Calu3 (cell line): ENCODE measurements at regions of chr17 and their contacts with region 1.

Region 1: GRCh38 chr17:39730095-39730921 is at the start of gene MIEN1:
- DNase-seq: no peak
- H3K4me3 Mint-ChIP-seq: peak within 1 kb of the TSS; percentile 79
- H3K27ac Mint-ChIP-seq: peak within 1 kb of the TSS; percentile 90
- H3K4me1 Mint-ChIP-seq: peaks cover 34% of the 10 kb centered on the region
- H3K27me3 Mint-ChIP-seq: no peaks in the 10 kb centered on the region
- CTCF ChIP-seq: no peak
- total RNA-seq, gene MIEN1: 2,121 and 2,217 TPM in 2 replicates

Region 2: GRCh38 chr17:39547713-39548478 is 182.4 kb before region 1 on chr17:
- CTCF ChIA-PET with region 1: interaction called, 14 read pairs
- intact Hi-C with region 1: no loop called
- DNase-seq: peak; percentile 96
- H3K4me3 Mint-ChIP-seq: no peak overlapping the region
- H3K27ac Mint-ChIP-seq: no peak overlapping the region
- H3K4me1 Mint-ChIP-seq: peaks cover 12% of the 10 kb centered on the region
- H3K27me3 Mint-ChIP-seq: no peaks in the 10 kb centered on the region
- CTCF ChIP-seq: peak; percentile 100

Region 3: DNA sequence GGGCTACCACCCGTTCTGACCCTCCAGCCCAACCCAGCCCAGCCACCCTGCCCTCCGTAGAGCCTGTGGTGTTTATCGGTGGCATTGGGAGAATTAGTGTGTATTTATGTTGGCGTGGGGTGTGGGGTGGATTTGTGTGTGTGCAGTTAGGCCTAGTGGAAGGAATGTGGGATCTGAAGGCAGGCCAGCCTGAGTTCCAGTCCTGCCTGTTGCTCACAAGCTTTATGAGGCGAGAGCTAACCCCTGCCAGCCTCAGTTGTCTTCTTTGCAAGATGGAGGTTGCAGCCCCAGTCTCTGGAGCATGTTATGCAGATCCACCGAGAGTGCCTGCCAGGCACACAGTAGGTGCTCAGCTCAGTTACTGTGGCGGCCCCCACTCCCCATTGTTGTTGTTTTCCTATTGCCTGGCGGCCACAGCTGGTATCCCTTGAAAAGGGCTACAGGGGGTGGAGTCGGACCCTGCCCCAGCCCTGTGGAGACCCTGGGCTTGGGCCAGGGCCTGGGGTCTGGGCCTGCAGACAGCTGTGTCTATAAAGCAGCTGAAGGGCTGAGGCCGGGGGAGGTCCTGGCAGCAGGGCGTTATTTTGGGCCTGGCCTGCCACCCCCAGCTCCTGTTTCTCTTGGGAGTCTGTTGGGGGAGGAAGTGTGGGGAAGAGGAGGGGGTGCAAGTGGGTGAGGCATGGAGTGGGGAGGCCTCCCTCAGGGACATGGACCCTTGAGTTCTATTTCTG is 25.3 kb before region 1 on chr17:
- CTCF ChIA-PET with region 1: interaction called, 34,714 read pairs
- intact Hi-C with region 1: loop called (anchors 1 kb)
- DNase-seq: peak; percentile 99
- H3K4me3 Mint-ChIP-seq: peak overlapping the region; percentile 71
- H3K27ac Mint-ChIP-seq: peak overlapping the region; percentile 67
- H3K4me1 Mint-ChIP-seq: peaks cover 92% of the 10 kb centered on the region
- H3K27me3 Mint-ChIP-seq: no peaks in the 10 kb centered on the region
- CTCF ChIP-seq: no peak

Region 4: GRCh38 chr17:39828443-39828842 is 98.1 kb after region 1 on chr17:
- CTCF ChIA-PET with region 1: interaction called, 1,211 read pairs
- intact Hi-C with region 1: loop called (anchors 1 kb)
- DNase-seq: peak; percentile 100
- H3K4me3 Mint-ChIP-seq: peak overlapping the region; percentile 36
- H3K27ac Mint-ChIP-seq: peak overlapping the region; percentile 48
- H3K4me1 Mint-ChIP-seq: peaks cover 17% of the 10 kb centered on the region
- H3K27me3 Mint-ChIP-seq: no peaks in the 10 kb centered on the region
- CTCF ChIP-seq: no peak

Region 5: GRCh38 chr17:39903158-39903884 is 173.0 kb after region 1 on chr17:
- CTCF ChIA-PET with region 1: interaction called, 679 read pairs
- intact Hi-C with region 1: no loop called
- DNase-seq: peak; percentile 66
- H3K4me3 Mint-ChIP-seq: no peak overlapping the region
- H3K27ac Mint-ChIP-seq: no peak overlapping the region
- H3K4me1 Mint-ChIP-seq: peaks cover 12% of the 10 kb centered on the region
- H3K27me3 Mint-ChIP-seq: no peaks in the 10 kb centered on the region
- CTCF ChIP-seq: no peak

Region 6: GRCh38 chr17:39939588-39940419 is 209.5 kb after region 1 on chr17:
- CTCF ChIA-PET with region 1: interaction called, 1,335 read pairs
- intact Hi-C with region 1: no loop called
- DNase-seq: peak; percentile 76
- H3K4me3 Mint-ChIP-seq: no peak overlapping the region
- H3K27ac Mint-ChIP-seq: no peak overlapping the region
- H3K4me1 Mint-ChIP-seq: peaks cover 12% of the 10 kb centered on the region
- H3K27me3 Mint-ChIP-seq: peaks cover 63% of the 10 kb centered on the region
- CTCF ChIP-seq: no peak

Region 7: DNA sequence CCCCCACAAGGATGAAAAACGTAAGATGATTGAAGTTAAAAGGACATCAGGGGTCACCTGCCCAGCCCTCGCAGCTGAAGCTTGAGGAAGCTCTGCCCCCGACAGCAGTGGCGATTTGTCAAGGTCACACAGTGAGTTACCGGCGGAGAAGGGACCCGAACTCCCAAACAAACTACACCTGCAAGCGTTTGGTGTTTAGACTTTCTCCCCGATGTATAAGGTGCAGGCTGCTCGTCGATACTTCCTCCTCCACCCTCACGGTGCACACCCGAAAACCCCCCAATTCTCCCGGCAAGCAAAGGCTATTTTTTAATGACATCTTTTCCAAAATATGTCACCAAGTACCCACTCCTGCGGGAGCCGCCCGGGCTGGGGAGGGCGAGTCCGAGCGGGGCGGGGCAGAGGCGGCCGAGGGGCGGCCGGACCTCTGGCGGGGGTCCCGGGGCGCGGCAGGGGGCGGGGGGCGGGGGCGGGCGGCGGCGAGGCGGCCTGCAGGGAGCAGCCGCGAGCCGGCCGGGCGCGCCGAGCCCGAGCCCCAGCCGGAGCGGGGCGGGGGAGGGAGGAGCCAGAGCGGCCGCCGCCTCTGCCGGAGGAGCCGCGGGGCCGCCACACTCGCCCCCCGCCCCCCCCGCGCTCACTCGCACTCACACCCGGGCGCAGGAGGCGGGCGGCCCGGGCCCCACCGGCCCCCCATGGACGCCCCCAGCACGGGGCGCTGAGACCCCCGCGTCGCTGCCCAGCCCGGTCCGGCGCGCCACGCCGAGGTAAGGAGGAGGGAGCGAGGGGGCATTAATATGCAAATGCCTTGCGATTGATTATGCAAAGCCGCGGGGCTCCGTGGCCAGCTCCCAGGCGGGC is 332.2 kb after region 1 on chr17 and contains the start of gene THRA:
- CTCF ChIA-PET with region 1: no interaction called
- intact Hi-C with region 1: no loop called
- DNase-seq: peak; percentile 100
- H3K4me3 Mint-ChIP-seq: peak within 1 kb of the TSS; percentile 54
- H3K27ac Mint-ChIP-seq: peak within 1 kb of the TSS; percentile 27
- H3K4me1 Mint-ChIP-seq: peaks cover 55% of the 10 kb centered on the region
- H3K27me3 Mint-ChIP-seq: peaks cover 52% of the 10 kb centered on the region
- CTCF ChIP-seq: no peak
- total RNA-seq, gene THRA: 107 and 133 TPM in 2 replicates

Region 8: DNA sequence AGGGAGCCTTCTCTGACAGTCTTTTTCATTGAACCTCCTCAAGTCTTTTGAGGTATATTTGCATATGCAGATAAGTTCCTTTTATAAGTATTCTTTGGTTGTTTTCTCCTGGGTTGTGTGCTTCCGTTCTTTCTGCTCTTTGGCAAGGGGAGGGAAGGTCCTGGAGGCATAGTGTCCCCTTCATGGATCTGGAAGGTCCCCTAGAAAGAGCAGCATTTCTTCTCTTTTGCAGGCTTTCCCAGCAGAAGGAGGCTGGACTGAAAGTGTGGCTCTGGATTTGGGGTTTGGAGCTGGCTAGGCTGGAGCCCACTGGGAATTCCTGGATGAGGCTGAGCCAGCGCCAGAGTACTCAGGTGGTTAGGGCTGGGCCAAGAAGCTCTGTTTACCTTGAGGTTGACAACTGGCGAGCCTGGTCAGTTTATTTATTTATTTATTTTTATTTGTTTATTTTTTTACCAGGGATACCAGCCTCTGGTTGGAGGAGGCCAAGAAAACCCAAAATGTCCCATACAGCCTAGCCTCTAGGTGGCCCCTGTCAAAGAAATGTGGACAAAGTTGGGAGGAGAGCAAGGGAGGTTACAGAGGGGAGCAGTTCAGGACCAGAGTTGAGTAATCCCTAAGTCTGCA is 692.8 kb after region 1 on chr17:
- CTCF ChIA-PET with region 1: interaction called, 17 read pairs
- intact Hi-C with region 1: no loop called
- DNase-seq: peak; percentile 73
- H3K4me3 Mint-ChIP-seq: no peak overlapping the region
- H3K27ac Mint-ChIP-seq: no peak overlapping the region
- H3K4me1 Mint-ChIP-seq: peaks cover 20% of the 10 kb centered on the region
- H3K27me3 Mint-ChIP-seq: peaks cover 24% of the 10 kb centered on the region
- CTCF ChIP-seq: no peak